Thyroid gland (tissue), 4 donors: ENCODE measurements at regions of chr22 and their contacts with region 1.

Region 1: DNA sequence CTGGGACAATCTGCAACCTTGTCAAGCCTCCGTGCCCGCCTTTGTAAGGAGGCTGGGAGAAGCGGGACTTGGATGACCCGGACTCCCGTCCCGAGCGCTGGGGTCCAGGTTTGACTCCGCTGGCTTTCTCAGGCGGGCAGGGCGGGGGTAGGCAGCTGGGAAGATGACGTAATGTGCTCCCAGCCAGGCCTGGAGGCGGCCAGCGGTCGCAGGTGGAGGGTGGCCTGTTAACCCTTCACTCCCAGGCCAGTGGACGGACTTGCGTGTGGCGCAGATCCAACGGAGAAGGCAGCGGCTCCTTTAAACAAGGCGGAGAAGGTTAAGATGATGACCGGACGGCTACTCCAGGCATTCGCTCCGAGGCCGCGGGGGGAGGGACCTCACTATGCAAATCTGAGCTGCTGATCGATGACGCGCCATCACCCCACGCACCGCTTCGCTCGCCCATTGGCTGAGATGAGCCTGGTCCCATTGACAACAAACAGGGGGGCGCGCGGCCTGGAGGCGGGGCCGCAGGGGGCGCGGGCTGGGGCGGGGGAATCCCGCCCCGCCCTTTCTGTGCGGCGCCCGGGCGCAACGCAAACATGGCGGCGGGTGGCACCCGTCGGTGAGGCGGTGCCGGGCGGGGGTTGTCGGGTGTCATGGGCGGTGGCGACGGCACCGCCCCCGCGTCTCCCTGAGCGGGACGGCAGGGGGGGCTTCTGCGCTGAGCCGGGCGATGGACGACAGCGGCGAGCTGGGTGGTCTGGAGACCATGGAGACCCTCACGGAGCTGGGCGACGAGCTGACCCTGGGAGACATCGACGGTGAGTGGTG is at the start of gene SREBF2:
- DNase-seq: peak; percentile 100
- H3K4me3 ChIP-seq: peak within 1 kb of the TSS; percentile 63 to 93 (median 77)
- H3K27ac ChIP-seq: peak within 1 kb of the TSS; percentile 83 to 95 (median 94)
- H3K4me1 ChIP-seq: peaks cover 5 to 9% of the 10 kb centered on the region in 2 donors
- H3K27me3 ChIP-seq: no peaks in the 10 kb centered on the region
- CTCF ChIP-seq: no peak
- POLR2A ChIP-seq: peak; percentile 72 to 76
- total RNA-seq, gene SREBF2: 34.4 to 91.8 (median 63.7) TPM

Region 2: DNA sequence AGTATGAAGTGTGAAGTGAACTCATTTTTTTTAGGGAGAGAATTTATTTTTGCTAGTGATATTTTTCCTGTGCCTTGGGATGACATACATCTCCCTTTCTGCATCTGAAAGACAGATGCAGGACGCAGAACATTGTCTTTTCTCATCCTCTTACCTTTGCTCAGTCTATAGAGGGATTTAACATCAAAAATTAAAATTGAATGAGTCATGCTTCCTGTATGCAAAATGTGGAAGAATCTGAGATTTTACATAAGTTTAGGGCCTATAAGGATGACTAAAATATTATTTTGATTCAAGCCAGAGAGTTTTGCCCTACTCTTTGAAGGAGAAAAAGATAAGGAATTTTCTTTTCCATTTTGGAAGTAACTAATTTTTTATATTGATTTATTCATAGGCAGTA is 184.3 kb before region 1 on chr22:
- intact Hi-C with region 1: no loop called
- DNase-seq: no peak
- H3K4me3 ChIP-seq: no peak overlapping the region
- H3K27ac ChIP-seq: no peak overlapping the region
- H3K4me1 ChIP-seq: no peaks in the 10 kb centered on the region
- H3K27me3 ChIP-seq: no peaks in the 10 kb centered on the region
- CTCF ChIP-seq: no peak
- POLR2A ChIP-seq: no peak

Region 3: DNA sequence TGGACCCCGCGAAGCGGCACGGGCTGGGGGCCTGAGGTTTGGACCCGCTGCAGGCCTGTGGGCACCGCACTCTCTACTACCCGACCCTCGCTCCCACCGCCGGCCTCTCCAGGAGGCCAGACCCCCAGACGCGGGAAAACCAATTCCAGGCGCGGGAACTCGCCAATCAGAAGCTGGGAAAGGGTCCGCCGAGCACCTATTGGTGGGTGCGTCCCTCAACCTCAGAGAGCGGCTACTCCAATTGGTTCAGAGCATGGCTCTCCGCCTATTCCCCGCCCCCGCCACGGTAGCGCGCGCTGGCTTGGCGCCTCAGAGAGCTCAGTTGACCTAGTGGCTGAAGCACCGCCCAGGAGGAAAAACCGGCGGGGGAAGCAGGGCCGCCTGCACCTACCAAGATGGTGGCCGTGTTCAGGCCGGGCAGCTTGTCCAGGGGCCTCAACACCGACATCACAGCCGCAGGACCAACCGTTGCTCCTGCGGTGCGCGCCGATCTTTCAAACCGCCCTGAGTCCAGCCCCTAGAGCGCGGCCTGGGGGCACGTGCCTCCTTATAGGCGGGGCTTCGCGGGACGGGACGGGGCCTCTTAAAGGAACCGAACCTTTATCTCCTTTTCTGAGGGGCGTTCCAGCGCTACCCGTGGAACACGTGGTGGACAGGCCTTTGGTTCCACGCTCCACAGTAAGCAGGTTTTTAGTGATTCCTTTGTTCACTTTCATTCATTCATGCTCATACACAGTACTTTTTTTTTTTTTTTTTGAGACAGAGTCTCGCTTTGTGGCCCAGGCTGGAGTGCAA is 114.1 kb after region 1 on chr22 and contains the start of gene CENPM:
- intact Hi-C with region 1: loop called (anchors 5 kb)
- DNase-seq: peak; percentile 93 to 94
- H3K4me3 ChIP-seq: peak within 1 kb of the TSS; percentile 19 to 49 (median 49)
- H3K27ac ChIP-seq: peak within 1 kb of the TSS in 1 of 3 donors; percentile 52
- H3K4me1 ChIP-seq: peaks cover 5 to 13% of the 10 kb centered on the region in 2 donors
- H3K27me3 ChIP-seq: no peaks in the 10 kb centered on the region
- CTCF ChIP-seq: peak in 1 of 6 experiments; percentile 12
- POLR2A ChIP-seq: peak in 1 of 2 donors; percentile 9
- total RNA-seq, gene CENPM: 0.56 TPM in 1 of 4 donors, not detected in the others

Region 4: DNA sequence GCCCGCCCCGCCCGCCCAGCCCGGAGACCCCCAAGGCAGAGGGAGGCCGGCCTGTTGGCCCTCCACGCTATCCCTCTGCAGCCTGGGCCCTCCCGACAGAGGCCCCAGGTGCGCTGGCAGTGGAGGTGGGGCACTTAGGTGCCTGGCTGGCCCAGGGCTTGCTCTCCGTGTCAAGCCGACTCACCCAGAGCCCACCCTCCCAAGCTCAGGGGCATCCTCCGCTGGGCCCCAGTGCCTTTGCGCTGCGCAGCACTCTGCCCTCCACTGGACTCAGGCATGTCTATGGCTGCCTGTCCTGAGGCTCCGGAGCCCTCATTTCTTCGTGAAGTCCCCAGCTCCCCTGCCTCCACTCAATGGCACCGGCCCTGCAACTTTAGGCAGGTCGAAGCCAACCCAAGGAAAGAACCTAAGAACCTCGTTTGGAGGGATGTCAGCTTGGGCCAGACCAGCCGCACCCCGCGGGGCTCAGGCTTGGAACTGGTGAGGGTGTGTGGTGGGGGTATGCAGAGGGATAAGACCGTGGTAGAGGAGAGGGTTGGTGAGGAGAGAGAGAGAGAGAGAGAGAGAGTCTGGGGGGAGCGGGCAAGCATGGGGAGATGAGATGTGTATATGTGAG is 125.3 kb after region 1 on chr22:
- intact Hi-C with region 1: no loop called
- DNase-seq: no peak
- H3K4me3 ChIP-seq: no peak overlapping the region
- H3K27ac ChIP-seq: no peak overlapping the region
- H3K4me1 ChIP-seq: peaks cover 3 to 19% of the 10 kb centered on the region in 2 donors
- H3K27me3 ChIP-seq: no peaks in the 10 kb centered on the region
- CTCF ChIP-seq: peak in 1 of 6 experiments; percentile 13
- POLR2A ChIP-seq: no peak

Region 5: GRCh38 chr22:41976401-41976901 is 143.7 kb after region 1 on chr22:
- intact Hi-C with region 1: no loop called
- DNase-seq: peak; percentile 40 to 47
- H3K4me3 ChIP-seq: peak overlapping the region in 1 of 3 donors; percentile 37
- H3K27ac ChIP-seq: no peak overlapping the region
- H3K4me1 ChIP-seq: peaks cover 0 to 13% of the 10 kb centered on the region in 2 donors
- H3K27me3 ChIP-seq: no peaks in the 10 kb centered on the region
- CTCF ChIP-seq: no peak
- POLR2A ChIP-seq: no peak